ENCODE measurements at regions of chr5 and their contacts with region 1.

Region 1: DNA sequence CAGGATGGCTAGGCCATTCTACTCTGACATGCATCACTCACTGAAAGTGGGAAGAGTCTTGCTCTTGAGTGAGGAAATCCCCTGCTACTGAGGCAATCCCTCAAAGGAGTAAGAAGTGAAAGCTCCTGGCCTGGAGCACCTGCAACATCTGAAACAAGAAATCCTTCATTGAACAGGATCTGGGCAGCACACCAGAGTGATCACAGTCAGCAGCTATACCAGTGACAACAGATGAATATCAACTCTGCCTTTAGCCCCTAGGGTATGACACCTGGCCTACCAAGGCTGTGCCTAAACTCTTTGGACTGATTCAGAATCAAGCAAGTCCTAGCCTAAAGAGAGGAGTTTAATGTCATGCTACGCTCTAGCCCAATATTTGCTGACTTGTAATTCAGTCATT is 156.2 kb upstream of the CCDC152 start:
- DNase-seq: no peak
- H3K4me3 ChIP-seq: no peak overlapping the region
- H3K27ac ChIP-seq: peak overlapping the region in 1 of 2 donors; percentile 27
- H3K4me1 ChIP-seq: peaks cover 0 to 9% of the 10 kb centered on the region in 2 donors
- H3K27me3 ChIP-seq: no peaks in the 10 kb centered on the region
- CTCF ChIP-seq: no peak
- POLR2A ChIP-seq: no peak

Region 2: DNA sequence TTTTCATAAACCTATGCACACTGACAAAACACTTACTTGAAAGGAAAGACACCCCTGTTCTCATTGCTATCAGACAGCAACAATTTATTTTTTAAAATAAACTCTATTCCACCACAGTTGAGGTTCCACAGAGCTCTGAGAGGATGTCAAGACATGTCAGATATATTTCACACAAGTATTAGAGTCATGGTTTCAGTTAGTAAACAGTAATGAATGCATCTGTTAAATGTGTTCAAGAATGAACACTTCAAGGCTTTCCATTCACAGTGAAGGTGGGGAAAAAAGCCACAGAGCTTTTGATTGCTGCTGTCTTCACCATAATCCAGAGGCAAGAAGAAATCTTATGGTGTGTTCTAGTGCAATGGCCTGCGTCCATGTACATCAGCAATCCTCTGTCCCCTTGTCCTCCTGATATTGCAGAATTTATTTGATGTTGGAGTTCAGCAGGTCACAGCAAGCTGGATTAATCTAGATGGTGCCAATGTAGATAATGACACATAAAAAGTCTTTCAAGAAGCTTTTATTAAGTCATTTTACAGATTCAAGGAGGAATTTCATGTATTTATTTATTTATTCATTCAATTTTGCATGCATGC is 30.4 kb before region 1 on chr5:
- intact Hi-C with region 1: loop called (anchors 2 kb)
- DNase-seq: no peak
- H3K4me3 ChIP-seq: no peak overlapping the region
- H3K27ac ChIP-seq: no peak overlapping the region
- H3K4me1 ChIP-seq: peaks cover 0 to 3% of the 10 kb centered on the region in 2 donors
- H3K27me3 ChIP-seq: no peaks in the 10 kb centered on the region
- CTCF ChIP-seq: no peak
- POLR2A ChIP-seq: no peak

Region 3: GRCh38 chr5:43105369-43106289 is 505.2 kb after region 1 on chr5:
- intact Hi-C with region 1: no loop called
- DNase-seq: peak; percentile 79 to 83
- H3K4me3 ChIP-seq: peak overlapping the region; percentile 12 to 68 (median 50)
- H3K27ac ChIP-seq: peak overlapping the region; percentile 68 to 86
- H3K4me1 ChIP-seq: no peaks in the 10 kb centered on the region
- H3K27me3 ChIP-seq: no peaks in the 10 kb centered on the region
- CTCF ChIP-seq: peak; percentile 91 to 99 (median 96)
- POLR2A ChIP-seq: no peak

Measured in breast epithelium (tissue), 4 donors.